Caco-2 (cell line): ENCODE measurements at regions of chr1 and their contacts with region 1.

Region 1: DNA sequence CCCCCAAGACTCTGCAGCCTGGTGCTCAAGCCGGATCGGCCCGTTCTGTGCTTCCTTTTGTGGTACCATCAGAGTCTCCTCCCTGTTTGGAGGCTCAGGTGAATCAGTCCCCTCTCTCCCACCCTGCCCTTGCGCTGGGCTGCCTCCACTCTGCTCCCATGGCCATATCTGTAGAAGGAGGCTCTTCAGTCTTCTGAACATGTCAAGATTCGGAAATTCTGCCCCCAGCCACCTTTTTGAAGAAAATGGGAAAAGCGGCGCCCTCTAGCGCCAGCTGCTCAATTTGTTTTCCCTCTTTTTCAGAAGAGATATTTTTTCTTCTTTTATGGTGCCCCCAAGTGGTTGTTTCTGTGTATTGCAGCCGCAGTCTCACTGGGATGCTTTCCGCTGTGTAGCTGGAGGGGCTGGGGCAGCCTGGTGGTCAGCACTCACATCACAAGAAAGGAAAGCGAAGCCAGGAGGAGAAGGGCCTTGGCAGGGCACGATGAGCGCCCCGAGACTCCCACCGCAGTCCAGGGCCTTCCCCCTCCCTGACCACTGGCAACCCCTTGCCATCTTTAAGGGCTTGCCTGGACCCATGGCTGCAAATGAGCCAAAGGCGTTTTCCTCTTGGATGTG is 58.4 kb upstream of the CACNA1E start:
- DNase-seq: peak; percentile 77 to 86
- H3K4me3 ChIP-seq: no peak overlapping the region
- H3K4me3 Mint-ChIP-seq: peak overlapping the region; percentile 48
- H3K27ac Mint-ChIP-seq: no peak overlapping the region
- H3K4me1 ChIP-seq: no peaks in the 10 kb centered on the region; the same call in 1 of the 2 replicates
- H3K4me1 Mint-ChIP-seq: peaks cover 6% of the 10 kb centered on the region
- H3K27me3 ChIP-seq: no peaks in the 10 kb centered on the region
- H3K27me3 Mint-ChIP-seq: peaks cover 12% of the 10 kb centered on the region
- CTCF ChIP-seq: peak; percentile 98 to 99

Region 2: DNA sequence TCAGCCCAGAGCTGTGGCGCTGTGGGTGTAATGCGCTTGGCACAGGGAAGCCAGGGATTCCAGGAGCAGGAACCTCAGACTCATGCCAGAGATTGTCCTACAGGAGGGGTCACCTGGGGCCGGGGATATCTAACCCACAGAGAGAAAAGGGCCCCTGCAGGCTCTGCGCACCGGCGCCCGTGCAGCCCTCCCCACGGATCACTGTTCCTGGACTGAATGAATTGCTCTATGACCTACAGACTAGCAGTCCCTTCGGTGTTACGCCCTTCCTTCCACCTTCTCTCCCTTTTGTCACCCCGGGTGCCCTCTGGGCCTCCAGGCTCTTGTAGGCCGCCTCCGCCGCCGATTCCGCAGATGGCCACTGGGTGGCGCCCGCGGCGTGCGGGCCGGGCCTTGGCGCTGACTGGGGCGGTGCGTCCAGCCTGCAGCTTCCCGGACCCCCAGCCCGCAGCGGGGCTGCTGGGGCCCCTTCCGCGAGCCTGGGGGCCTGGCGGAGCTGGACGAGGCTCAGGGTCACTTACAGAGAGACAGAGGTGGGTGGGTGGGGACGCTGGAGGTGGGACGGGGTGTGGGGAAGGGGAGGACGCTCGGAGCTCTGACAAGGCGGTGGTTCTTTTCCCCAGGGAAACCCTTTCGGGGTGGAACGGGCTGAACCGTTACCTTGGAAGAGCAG is 235.1 kb before region 1 on chr1:
- CTCF ChIA-PET with region 1: interaction called, 43 read pairs
- POLR2A ChIA-PET with region 1: interaction called, 11 read pairs
- intact Hi-C with region 1: loop called (anchors 1 kb)
- DNase-seq: peak; percentile 62 to 89
- H3K4me3 ChIP-seq: peak overlapping the region; percentile 23
- H3K4me3 Mint-ChIP-seq: peak overlapping the region; percentile 50
- H3K27ac Mint-ChIP-seq: no peak overlapping the region
- H3K4me1 ChIP-seq: no peaks in the 10 kb centered on the region
- H3K4me1 Mint-ChIP-seq: peaks cover 6% of the 10 kb centered on the region
- H3K27me3 ChIP-seq: no peaks in the 10 kb centered on the region; the same call in 1 of the 2 replicates
- H3K27me3 Mint-ChIP-seq: peaks cover 28% of the 10 kb centered on the region
- CTCF ChIP-seq: peak; percentile 94 to 96

Region 3: DNA sequence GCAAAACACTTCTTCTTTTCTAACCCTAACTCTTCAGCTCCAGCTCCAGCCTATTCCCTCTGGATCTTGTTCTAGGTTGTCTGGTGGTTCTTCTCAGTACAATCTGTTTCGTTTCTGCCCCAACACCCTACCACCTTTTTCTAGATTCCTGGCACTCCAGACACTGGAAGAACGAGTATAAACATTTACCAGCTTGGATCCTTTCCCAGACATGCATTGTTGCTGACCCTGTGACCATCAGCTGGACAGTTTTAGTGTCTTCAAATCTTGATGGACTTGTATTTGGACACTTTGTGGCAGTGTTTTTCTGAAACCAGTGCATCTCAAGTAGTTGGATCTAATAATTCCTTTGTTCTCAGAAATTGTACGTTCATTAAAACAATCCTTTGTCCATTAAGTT is 27.9 kb after region 1 on chr1:
- CTCF ChIA-PET with region 1: no interaction called
- POLR2A ChIA-PET with region 1: no interaction called
- intact Hi-C with region 1: loop called (anchors 1 kb)
- DNase-seq: no peak
- H3K4me3 ChIP-seq: no peak overlapping the region
- H3K4me3 Mint-ChIP-seq: no peak overlapping the region
- H3K27ac Mint-ChIP-seq: peak overlapping the region; percentile 94
- H3K4me1 ChIP-seq: peaks cover 50% of the 10 kb centered on the region
- H3K4me1 Mint-ChIP-seq: peaks cover 34% of the 10 kb centered on the region
- H3K27me3 ChIP-seq: no peaks in the 10 kb centered on the region
- H3K27me3 Mint-ChIP-seq: no peaks in the 10 kb centered on the region
- CTCF ChIP-seq: no peak